ENCODE measurements at regions of chr17 and their contacts with region 1.

Region 1: GRCh38 chr17:76408052-76408849 is 23.8 kb downstream of the SPHK1 start:
- DNase-seq: peak; percentile 63 to 89 (median 72)
- H3K4me3 ChIP-seq: no peak overlapping the region
- H3K27ac ChIP-seq: no peak overlapping the region
- H3K4me1 ChIP-seq: peaks cover 7 to 22% of the 10 kb centered on the region in 2 donors
- H3K27me3 ChIP-seq: no peaks in the 10 kb centered on the region
- CTCF ChIP-seq: peak; percentile 56 to 86 (median 69)
- POLR2A ChIP-seq: no peak

Region 2: GRCh38 chr17:76452660-76453430 is 44.6 kb after region 1 on chr17 and contains the start of gene UBE2O:
- intact Hi-C with region 1: loop called in 1 of 2 experiments (anchors 10 kb)
- DNase-seq: peak; percentile 80 to 91 (median 86)
- H3K4me3 ChIP-seq: peak within 1 kb of the TSS; percentile 80 to 99 (median 87)
- H3K27ac ChIP-seq: peak within 1 kb of the TSS in 2 of 5 donors; percentile 80 to 89
- H3K4me1 ChIP-seq: peaks cover 8 to 21% of the 10 kb centered on the region in 2 donors
- H3K27me3 ChIP-seq: no peaks in the 10 kb centered on the region
- CTCF ChIP-seq: peak in 5 of 6 experiments; percentile 14 to 29 (median 26)
- POLR2A ChIP-seq: peak; percentile 25 to 59
- total RNA-seq, gene UBE2O: 10.4 to 21.8 (median 17.3) TPM

Region 3: DNA sequence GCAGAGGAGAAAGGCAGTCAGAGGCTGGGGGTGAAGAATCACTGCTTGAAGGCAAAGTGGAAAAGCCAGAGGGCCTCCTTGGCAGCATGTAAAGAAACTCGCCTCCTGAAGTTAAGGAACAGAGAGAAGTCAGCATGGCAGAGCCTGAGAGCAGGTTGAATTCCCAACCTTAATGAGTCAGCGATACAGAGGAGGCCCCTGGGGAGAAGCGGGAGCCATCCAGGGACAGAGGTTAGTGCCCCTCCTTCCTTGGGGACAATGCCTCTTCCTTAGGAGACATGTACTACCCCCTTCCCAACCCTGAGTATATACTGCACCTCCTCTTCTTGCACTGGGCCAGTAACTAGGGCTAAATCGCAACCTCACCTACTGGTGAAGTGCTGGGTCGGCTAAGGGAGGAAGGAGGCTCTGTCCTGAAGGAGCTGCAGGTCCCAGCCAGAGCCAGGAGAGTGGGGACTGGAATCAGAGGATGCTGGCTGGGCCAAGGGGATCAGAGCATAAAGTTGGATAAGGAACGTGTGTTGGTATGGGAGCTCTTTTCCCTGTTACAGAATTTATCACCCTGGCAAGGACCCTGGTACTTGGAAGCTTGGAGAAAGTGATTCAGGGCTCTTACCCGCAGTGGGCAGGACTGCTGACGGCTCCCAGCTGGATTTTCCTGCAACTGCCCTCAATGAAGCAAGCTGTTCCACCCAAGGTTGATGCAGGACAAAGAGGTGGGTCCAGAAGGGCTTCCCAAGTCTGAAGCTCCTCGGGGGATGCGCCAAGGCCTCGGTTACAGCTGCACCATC is 53.7 kb after region 1 on chr17:
- intact Hi-C with region 1: loop called (anchors 2 to 10 kb)
- DNase-seq: no peak
- H3K4me3 ChIP-seq: no peak overlapping the region
- H3K27ac ChIP-seq: no peak overlapping the region
- H3K4me1 ChIP-seq: peaks cover 0 to 3% of the 10 kb centered on the region in 2 donors
- H3K27me3 ChIP-seq: no peaks in the 10 kb centered on the region
- CTCF ChIP-seq: no peak
- POLR2A ChIP-seq: no peak

Region 4: GRCh38 chr17:76473541-76473985 is 65.3 kb after region 1 on chr17:
- intact Hi-C with region 1: no loop called
- DNase-seq: no peak
- H3K4me3 ChIP-seq: no peak overlapping the region
- H3K27ac ChIP-seq: no peak overlapping the region
- H3K4me1 ChIP-seq: no peaks in the 10 kb centered on the region
- H3K27me3 ChIP-seq: no peaks in the 10 kb centered on the region
- CTCF ChIP-seq: peak in 1 of 6 experiments; percentile 18
- POLR2A ChIP-seq: no peak

Region 5: GRCh38 chr17:76501018-76501826 is 93.0 kb after region 1 on chr17 and contains the start of gene RHBDF2:
- intact Hi-C with region 1: loop called (anchors 5 to 10 kb)
- DNase-seq: peak; percentile 89 to 96 (median 92)
- H3K4me3 ChIP-seq: peak within 1 kb of the TSS in 3 of 4 donors; percentile 35 to 94 (median 38)
- H3K27ac ChIP-seq: peak within 1 kb of the TSS; percentile 17 to 95 (median 77)
- H3K4me1 ChIP-seq: peaks cover 17 to 34% of the 10 kb centered on the region in 2 donors
- H3K27me3 ChIP-seq: no peaks in the 10 kb centered on the region
- CTCF ChIP-seq: peak in 1 of 6 experiments; percentile 19
- POLR2A ChIP-seq: peak; percentile 66 to 85
- total RNA-seq, gene RHBDF2: 9.9 to 156 (median 43.6) TPM

Region 6: DNA sequence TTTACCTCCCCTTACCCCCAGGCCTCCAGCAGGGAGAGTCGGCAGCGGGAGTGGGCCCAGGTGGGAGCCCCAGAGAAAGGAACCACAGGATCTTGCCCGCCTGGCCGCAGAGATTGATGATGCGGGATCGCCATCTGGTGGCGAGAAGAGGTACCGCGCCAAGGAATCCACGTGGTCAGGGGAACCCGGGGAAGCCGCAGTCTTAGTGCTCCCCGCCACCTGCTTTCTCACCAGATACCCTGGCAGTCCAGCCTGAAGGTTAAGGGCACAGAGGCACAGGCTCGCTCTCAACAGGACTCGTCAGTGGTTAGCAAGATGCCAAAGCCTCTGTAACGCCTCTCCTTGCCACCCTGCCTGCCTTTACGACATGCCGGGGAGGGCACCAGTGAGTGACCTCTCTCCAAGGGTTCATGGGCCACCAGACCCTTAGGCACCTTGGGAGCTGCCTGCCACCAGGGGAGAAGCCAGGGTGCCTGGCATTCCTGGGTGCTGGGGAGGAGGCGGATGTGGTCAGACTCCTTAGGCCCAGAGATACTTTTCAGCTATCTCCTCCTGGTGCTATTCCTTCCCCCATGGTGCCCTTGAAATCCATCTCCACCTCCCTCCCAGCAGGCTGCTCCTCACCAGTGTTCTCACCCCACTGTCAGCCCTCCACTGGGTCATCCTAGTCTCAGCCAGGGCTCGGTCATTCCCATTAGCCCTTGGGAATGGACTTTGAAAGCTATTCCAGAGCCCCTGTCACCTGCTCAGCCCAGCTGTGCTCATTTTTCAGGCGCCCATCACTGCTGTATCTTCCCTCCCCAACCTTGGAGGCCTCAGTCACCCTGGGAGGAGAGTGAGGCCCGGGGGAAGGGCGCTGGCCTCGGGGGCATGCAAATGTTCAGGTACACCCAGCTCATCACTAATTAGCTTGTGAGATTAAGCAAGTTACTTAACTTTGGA is 98.4 kb after region 1 on chr17:
- intact Hi-C with region 1: loop called (anchors 5 to 10 kb)
- DNase-seq: peak; percentile 71 to 94 (median 82)
- H3K4me3 ChIP-seq: no peak overlapping the region
- H3K27ac ChIP-seq: no peak overlapping the region
- H3K4me1 ChIP-seq: peaks cover 3 to 10% of the 10 kb centered on the region in 2 donors
- H3K27me3 ChIP-seq: no peaks in the 10 kb centered on the region
- CTCF ChIP-seq: peak; percentile 94 to 98 (median 96)
- POLR2A ChIP-seq: no peak